Breast epithelium (tissue), 4 donors: ENCODE measurements at regions of chr6 and their contacts with region 1.

Region 1: DNA sequence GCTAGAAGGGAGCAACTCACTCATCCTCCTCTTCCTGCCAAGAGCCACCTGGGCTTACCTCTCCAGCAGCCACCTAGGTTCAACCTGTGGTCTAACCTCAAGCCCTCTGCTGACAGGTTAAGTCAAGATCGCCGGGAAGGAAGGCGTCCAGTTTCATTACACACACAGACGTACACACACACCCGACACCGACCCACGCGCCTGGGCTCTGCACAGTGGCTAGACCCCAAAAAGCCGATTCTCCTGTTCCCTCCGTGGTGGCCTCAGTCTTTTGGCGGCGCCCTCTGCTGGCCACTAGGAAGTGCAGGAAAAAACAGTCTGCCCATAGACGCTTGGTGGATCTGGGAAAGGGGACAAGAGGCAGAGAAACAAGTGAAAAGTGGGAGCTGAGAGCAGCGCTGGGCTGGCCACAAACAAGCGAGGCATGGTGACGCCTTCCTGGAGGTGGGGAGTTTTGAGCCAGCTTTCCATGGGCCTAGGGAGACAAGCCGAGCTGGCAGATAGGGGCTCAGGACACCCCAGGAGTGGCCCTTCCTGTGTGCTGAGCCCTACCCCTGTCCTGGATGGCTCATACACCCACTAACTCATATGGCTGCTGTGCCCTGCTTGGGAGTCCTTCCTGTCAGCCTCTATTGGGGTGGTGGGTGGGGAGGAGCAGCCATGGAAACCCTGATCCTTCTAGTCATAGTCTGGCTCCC is 52.7 kb downstream of the MRPL14 start:
- DNase-seq: no peak
- H3K4me3 ChIP-seq: peak overlapping the region in 1 of 3 donors; percentile 73
- H3K27ac ChIP-seq: peak overlapping the region; percentile 79 to 91
- H3K4me1 ChIP-seq: peaks cover 4 to 21% of the 10 kb centered on the region in 2 donors
- H3K27me3 ChIP-seq: no peaks in the 10 kb centered on the region
- CTCF ChIP-seq: peak; percentile 91 to 96 (median 94)
- POLR2A ChIP-seq: no peak

Region 2: DNA sequence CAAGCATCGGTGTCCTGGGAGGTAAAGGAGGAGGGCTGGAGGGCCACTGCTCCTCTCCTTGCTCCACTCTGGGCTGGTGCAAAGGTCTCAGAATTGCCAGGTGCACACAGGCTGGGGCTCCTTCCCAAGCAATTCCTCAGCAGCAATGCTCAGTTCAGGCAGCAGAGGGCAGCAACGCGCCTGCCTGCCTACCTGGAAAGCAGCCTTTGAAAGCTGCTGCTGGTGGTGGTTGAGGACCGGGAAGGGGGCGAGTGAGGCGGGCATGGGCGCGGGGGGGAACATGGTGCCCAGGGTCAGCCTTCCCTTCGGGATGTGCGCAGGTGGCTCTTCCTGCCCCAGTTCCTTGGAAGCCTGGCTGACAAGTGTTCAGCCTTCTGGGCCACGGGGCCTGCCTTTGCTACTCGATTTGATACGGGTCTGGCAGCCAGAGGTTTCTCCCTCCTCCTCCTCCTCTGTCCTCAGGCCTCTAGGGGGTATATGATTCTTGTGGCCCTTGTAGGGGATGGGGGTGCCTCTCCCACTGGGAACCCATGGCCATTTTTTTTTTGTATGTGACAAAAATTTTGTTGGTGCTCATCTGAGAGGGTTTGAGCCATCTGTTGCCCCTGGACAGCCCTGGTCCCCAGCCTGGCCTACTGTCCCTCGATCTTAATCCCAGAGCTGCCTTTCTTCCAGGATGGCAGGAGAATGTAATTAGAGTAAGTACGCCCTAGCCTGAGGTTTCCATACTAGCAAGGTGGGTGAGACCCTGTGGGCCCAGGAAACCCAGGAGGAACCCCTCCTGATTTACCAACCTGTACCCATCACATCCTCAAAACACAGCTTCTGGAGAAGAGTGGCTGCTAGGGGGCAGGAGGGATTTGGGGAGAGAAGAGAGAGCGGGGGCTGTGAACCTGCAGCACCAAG is 407.1 kb before region 1 on chr6:
- intact Hi-C with region 1: loop called (anchors 1 kb)
- DNase-seq: peak; percentile 81 to 87
- H3K4me3 ChIP-seq: peak overlapping the region in 1 of 3 donors; percentile 30
- H3K27ac ChIP-seq: peak overlapping the region; percentile 70 to 81
- H3K4me1 ChIP-seq: peaks cover 3 to 16% of the 10 kb centered on the region in 2 donors
- H3K27me3 ChIP-seq: no peaks in the 10 kb centered on the region
- CTCF ChIP-seq: peak; percentile 89 to 95 (median 93)
- POLR2A ChIP-seq: no peak

Region 3: DNA sequence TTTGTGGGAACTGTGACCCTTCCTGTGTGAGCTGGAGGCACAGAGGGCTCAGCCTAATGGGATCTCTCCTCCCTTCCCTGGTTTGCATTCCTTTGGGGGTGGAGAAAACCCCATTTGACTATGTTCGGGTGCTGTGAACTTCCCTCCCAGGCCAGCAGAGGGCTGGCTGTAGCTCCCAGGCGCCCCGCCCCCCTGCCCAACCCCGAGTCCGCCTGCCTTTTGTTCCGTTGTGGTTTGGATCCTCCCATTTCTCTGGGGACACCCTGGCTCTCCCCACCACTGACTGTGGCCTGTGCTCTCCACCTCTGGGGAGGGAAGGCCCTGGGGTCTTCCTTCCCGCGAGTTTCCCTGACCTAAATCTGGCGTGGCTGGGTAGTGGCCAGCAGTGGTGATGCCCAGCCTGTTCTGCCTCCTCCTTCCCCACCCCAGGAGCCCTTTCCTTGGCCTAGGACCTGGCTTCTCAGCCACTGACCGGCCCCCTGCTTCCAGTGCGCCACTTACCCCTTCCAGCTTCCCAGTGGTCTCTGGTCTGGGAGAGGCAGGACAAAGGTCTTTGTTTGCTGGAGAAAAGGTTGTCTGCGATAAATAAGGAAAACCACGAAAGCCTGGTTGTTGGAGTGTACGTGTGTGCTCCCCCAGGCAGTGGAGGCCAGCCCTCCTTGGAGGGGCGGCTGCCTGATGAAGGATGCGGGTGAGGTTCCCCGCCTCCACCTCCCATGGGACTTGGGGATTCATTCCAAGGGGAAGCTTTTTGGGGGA is 299.6 kb before region 1 on chr6:
- intact Hi-C with region 1: loop called (anchors 2 kb)
- DNase-seq: peak; percentile 79 to 83
- H3K4me3 ChIP-seq: peak overlapping the region; percentile 18 to 76 (median 75)
- H3K27ac ChIP-seq: peak overlapping the region; percentile 95 to 96
- H3K4me1 ChIP-seq: peaks cover 0 to 33% of the 10 kb centered on the region in 2 donors
- H3K27me3 ChIP-seq: no peaks in the 10 kb centered on the region
- CTCF ChIP-seq: peak; percentile 82 to 96 (median 87)
- POLR2A ChIP-seq: no peak

Region 4: GRCh38 chr6:43990627-43991619 is 83.7 kb before region 1 on chr6:
- intact Hi-C with region 1: loop called (anchors 10 kb)
- DNase-seq: no peak
- H3K4me3 ChIP-seq: no peak overlapping the region
- H3K27ac ChIP-seq: peak overlapping the region; percentile 51 to 52
- H3K4me1 ChIP-seq: peaks cover 0 to 4% of the 10 kb centered on the region in 2 donors
- H3K27me3 ChIP-seq: no peaks in the 10 kb centered on the region
- CTCF ChIP-seq: no peak
- POLR2A ChIP-seq: no peak